Head of caudate nucleus (tissue), 42 donors: ENCODE measurements at regions of chr9 and their contacts with region 1.

Region 1: GRCh38 chr9:86948074-86948929 is 996 bp upstream of the GAS1 start:
- DNase-seq: peak; percentile 77 to 95 (median 90)

Region 2: GRCh38 chr9:86354011-86354817 is 594.1 kb before region 1 on chr9 and contains the start of gene TUT7:
- intact Hi-C with region 1: loop called (anchors 10 kb)
- DNase-seq: peak; percentile 89 to 98 (median 96)

Region 3: DNA sequence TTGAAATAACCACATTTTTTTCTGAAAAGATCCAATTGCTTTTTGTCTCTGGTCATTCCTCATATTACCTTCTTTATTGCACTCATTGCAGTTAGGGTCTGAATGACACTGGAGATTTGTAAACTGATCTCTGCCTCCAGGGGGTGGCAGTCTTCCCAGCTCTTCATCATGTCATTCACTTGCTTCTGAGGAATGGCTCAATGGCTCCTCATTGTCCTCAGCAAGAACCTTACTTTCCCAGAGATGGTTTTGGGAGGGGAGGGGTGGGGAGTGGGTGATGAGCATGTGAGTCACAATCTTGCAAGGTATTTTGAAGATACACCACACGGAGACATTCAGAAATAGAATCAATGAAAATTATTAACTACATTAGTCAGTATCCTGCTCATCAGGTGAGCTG is 158.8 kb after region 1 on chr9:
- intact Hi-C with region 1: loop called (anchors 10 kb)
- DNase-seq: peak in 23 of 42 donors; percentile 7 to 79 (median 47)

Region 4: DNA sequence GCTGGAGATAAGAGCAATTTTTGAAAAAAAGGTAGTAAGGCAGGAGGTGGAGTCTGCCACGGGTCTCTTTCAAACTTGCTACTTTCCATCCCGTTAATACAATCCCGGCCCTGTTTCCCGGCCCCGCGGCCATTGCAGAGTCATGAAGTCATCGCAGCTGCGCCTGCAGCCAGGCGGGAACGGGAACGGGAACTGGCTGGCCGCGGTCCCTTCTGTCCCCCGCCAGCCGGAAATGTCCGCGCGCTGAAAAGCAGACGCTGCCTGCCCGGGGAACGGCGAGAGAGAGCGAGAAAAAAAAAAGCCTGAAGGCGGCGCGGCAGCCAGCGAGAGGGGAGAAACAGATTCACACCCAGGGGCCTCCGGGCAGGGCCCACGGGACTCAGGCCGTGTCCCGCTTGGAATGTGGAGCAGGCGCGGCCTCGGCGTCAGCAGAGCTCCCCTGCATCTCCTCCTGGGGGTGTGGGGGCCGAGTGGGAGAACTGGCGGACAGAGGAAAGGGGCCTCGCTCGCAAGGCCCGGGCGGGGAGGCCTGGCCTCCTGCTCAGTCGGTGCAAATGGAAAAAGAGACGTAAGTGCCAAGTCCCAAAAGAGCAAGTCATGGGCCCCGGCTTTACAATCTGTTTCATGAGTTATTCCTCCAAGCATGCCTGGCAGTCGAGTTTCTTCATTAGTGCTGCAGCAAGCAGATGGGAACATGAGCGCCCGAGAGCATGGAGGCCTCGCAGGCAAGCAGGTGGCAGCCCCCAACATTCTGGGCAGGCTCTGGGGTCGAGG is 200.2 kb after region 1 on chr9:
- intact Hi-C with region 1: loop called (anchors 5 kb)
- DNase-seq: peak; percentile 73 to 95 (median 88)

Region 5: GRCh38 chr9:87324613-87325194 is 376.4 kb after region 1 on chr9:
- intact Hi-C with region 1: loop called (anchors 10 kb)
- DNase-seq: peak in 4 of 42 donors; percentile 9 to 66 (median 20)